ENCODE measurements at regions of chr14 and their contacts with region 1.

Region 1: DNA sequence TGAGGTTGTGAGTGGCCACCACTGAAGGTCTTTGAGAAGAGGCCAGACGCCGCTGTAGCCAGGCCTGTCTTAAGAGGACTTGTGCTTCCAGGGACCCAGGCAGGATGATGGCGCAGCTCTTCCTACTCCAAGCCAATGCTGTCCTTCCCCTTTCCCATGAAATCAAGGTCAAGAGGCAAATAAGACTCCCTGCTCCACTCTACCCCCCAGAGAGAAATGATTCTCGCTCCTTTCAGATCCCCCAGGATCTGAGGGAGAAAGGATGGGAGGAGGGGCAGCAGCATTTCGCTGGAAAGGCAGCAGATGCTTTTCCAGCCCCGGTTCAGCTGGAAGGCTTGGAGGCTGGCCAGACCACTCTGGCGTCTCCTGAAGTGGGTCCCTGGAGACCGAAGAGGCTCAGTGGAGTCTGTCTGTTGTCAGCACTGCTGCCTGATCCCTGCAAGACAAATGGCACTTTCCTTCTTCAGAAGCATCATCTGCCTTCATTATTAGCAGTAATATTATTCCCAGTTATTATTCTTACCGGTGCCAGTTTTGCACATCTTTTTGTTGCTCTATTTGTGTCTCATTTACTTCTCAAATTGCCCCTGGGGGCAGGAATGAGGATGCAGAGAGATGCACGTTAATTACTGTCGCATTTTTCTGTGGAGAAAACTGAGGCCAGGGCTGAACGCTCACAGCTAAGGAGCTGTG is 51.4 kb downstream of the C14orf132 start:
- DNase-seq: peak; percentile 65
- ATAC-seq: peak; percentile 55
- H3K4me3 ChIP-seq: no peak overlapping the region
- H3K27ac ChIP-seq: no peak overlapping the region
- H3K4me1 ChIP-seq: peaks cover 18% of the 10 kb centered on the region
- H3K27me3 ChIP-seq: no peaks in the 10 kb centered on the region
- CTCF ChIP-seq: no peak
- POLR2A ChIP-seq: no peak
- RAD21 ChIP-seq: no peak

Region 2: GRCh38 chr14:96053600-96054381 is 36.8 kb before region 1 on chr14:
- CTCF ChIA-PET with region 1: interaction called, 7 read pairs
- POLR2A ChIA-PET with region 1: no interaction called
- dilution Hi-C with region 1: no loop called
- in situ Hi-C with region 1: no loop called
- intact Hi-C with region 1: loop called (anchors 5 kb)
- DNase-seq: peak; percentile 99
- ATAC-seq: peak; percentile 97
- H3K4me3 ChIP-seq: no peak overlapping the region
- H3K27ac ChIP-seq: no peak overlapping the region
- H3K4me1 ChIP-seq: peaks cover 16% of the 10 kb centered on the region
- H3K27me3 ChIP-seq: no peaks in the 10 kb centered on the region
- CTCF ChIP-seq: no peak
- POLR2A ChIP-seq: no peak
- RAD21 ChIP-seq: no peak

Measured in IMR-90 (cell line).